ENCODE measurements at regions of chr2 and their contacts with region 1.

Region 1: DNA sequence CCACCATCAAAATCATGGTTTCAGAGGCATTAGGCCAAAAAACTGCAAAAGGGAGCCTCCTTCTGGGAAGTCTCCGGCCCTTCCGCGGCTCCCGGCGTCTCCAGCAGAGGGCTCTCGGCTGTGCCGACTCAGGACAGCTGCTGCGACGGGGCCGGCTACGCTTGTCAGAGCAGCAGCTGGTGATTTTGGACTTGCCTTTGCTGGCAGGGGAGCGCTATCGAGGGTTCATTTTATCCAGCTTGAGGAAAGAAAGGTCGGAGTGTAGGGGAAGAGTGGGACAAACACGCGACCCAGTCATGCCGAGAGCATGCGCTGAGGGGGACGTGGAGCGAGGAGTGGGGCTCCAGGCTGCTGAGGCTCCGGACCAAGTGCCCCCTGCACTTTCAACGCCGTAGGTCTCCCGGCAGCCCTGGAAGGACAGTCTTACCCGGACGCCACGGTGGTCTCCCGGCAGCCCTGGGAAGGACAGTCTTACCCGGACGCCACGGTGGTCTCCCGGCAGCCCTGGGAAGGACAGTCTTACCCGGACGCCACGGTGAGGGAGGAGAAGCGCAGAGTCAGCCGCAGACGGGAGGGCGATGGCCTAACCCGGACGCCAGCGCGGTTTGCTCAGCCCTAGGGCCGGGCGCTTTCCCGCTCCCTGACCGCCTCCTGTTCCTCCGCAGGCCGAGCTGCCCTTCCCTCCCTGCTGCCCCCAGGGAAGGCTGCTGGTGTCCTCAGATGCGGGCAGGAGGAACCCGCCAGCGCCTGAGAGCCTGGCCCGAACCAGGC is 21.7 kb downstream of the DDX18 start:
- DNase-seq: peak; percentile 74
- H3K4me3 ChIP-seq: peak overlapping the region; percentile 9 to 62 (median 34)
- H3K27ac ChIP-seq: no peak overlapping the region
- H3K4me1 ChIP-seq: peaks cover 3% of the 10 kb centered on the region
- H3K27me3 ChIP-seq: no peaks in the 10 kb centered on the region
- CTCF ChIP-seq: peak; percentile 96 to 99
- POLR2A ChIP-seq: peak; percentile 12

Region 2: DNA sequence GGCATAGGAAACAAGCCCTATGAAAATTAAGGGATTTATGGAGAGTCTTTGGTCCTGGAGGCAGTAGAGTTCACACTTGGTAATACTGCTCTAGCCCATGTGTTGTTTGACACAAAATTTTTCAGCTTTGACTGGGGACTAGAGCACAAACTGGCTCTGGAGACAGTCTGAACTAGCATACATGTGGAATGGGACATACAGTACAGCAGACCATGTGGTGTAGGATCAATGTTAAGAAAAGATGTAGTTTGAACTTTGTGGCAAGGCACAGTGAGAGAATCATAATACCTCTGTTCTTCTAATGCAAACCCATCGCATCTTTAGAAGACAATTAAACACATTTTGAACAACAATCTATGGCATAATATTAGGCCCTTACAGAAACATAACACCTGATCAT is 543.2 kb before region 1 on chr2:
- CTCF ChIA-PET with region 1: no interaction called
- POLR2A ChIA-PET with region 1: no interaction called
- dilution Hi-C with region 1: no loop called
- intact Hi-C with region 1: no loop called
- DNase-seq: no peak
- H3K4me3 ChIP-seq: no peak overlapping the region
- H3K27ac ChIP-seq: no peak overlapping the region
- H3K4me1 ChIP-seq: no peaks in the 10 kb centered on the region
- H3K27me3 ChIP-seq: no peaks in the 10 kb centered on the region
- CTCF ChIP-seq: no peak
- POLR2A ChIP-seq: no peak

Region 3: DNA sequence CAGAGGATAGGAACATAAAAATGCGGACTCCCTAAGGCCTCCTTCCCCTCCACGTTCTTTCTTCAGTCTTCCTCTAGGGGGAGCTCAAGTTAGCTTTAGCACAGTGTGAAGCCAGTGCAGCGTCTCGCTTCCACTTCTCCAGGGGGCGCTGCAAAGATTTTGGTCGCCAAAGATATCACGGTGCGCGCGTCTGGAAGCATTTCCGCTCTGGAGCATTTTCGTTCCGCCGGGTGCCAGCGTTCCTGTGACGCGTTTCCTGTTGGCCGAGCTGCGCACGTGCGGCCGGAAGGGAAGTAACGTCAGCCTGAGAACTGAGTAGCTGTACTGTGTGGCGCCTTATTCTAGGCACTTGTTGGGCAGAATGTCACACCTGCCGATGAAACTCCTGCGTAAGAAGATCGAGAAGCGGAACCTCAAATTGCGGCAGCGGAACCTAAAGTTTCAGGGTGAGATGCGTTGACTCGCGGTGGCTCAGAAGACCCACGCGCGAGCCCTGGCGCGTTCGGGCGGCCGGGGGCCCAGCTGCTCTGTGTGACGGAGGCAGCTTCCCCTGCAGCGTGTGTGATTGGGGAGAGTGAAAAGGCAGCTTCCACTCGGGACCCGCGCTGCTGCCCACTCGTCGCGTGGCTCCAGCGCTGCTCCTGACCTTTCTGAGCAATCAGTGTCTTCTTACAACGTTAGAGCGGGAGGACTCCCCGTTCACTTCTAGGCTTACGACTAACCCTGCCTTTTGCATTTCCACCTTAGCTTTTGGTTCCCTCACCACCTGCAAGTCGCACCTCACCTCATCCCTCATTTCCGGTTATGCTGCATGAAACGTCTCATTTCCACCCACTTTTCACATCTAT is 21.5 kb before region 1 on chr2 and contains the start of gene DDX18:
- CTCF ChIA-PET with region 1: interaction called, 18 read pairs
- POLR2A ChIA-PET with region 1: no interaction called
- dilution Hi-C with region 1: no loop called
- intact Hi-C with region 1: no loop called
- DNase-seq: peak; percentile 99
- H3K4me3 ChIP-seq: peak within 1 kb of the TSS; percentile 40 to 82 (median 60)
- H3K27ac ChIP-seq: peak within 1 kb of the TSS; percentile 89
- H3K4me1 ChIP-seq: peaks cover 10% of the 10 kb centered on the region
- H3K27me3 ChIP-seq: peaks cover 0 to 2% of the 10 kb centered on the region in 2 experiments
- CTCF ChIP-seq: peak; percentile 100
- POLR2A ChIP-seq: peak; percentile 87
- total RNA-seq, gene DDX18: 47.8 and 50.4 TPM in 2 replicates

Region 4: DNA sequence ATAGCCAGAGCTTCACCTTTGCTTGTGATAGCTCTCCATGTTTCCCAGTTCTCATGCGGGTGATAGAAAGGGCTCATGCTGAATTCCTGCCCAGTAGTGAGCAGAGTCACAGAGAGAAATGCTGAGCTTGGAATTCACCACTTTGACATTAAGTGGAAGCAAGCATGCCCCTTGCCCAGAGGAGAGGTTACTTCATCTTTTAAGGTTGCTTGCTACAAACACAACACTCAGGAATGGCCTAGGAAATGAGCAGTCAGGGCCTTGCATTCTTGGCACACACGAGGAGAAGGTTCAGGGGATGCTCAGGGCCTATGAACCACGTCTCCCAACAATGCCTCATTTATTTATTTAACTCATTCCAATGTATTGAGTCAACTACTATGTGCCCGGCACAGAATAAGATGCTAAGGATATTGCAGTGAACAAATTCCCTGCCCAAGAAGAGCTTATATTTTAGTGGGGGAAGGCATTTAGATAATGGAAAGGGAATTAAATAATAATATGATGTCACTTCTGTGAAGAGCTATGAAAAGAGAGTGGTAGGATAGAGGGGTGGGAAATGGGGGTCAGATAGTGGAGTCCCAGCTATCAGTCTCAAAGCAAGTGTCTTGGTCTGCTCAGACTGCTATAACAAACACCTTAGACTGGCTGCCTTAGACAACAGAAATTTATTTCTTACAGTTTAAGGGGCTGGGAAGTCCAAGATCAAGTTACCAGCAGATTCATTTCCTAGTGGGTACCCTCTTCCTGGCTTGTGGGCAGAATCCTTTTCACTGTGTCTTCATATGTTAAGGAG is 20.4 kb after region 1 on chr2:
- CTCF ChIA-PET with region 1: interaction called, 17 read pairs
- POLR2A ChIA-PET with region 1: interaction called, 4 read pairs
- dilution Hi-C with region 1: no loop called
- intact Hi-C with region 1: loop called (anchors 1 kb)
- DNase-seq: peak; percentile 88
- H3K4me3 ChIP-seq: no peak overlapping the region
- H3K27ac ChIP-seq: peak overlapping the region; percentile 73
- H3K4me1 ChIP-seq: peaks cover 22% of the 10 kb centered on the region
- H3K27me3 ChIP-seq: peaks cover 7 to 12% of the 10 kb centered on the region in 2 experiments
- CTCF ChIP-seq: no peak
- POLR2A ChIP-seq: peak; percentile 4

Region 5: DNA sequence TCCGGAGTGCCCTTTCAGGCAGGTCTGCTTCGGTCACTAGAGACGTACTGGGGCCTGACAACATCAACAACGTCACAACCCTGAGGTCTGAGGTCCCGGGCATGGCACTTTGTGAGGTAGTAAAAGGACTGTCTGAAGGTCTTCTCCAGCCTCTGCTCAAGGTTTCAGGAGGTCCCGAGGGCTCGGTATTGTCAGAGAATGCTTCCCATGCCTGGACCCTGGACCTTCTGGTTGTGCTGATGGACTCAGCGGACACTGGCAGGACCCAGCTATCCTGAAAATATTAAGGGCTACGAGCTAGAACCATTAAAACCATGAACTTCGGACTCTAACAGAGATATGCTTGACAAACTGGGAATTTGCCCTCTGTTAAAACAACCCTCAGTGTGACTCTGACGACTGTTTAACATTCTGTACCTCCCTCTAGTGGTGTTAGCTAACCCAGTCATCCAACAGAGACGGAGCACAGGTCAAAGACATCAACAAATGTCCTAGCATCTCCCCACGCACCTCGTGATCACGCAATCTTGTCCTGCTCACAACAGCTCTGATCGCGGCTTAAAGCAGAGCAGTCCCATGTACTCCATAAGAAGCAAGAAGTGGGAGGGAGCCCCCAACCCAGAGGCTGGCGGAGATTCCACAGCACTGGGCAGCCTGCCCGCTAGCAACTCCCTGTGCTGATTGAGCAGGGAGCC is 81.2 kb after region 1 on chr2:
- CTCF ChIA-PET with region 1: interaction called, 15 read pairs
- POLR2A ChIA-PET with region 1: no interaction called
- dilution Hi-C with region 1: no loop called
- intact Hi-C with region 1: loop called (anchors 1 kb)
- DNase-seq: no peak
- H3K4me3 ChIP-seq: no peak overlapping the region
- H3K27ac ChIP-seq: no peak overlapping the region
- H3K4me1 ChIP-seq: no peaks in the 10 kb centered on the region
- H3K27me3 ChIP-seq: no peaks in the 10 kb centered on the region
- CTCF ChIP-seq: no peak
- POLR2A ChIP-seq: no peak

Region 6: DNA sequence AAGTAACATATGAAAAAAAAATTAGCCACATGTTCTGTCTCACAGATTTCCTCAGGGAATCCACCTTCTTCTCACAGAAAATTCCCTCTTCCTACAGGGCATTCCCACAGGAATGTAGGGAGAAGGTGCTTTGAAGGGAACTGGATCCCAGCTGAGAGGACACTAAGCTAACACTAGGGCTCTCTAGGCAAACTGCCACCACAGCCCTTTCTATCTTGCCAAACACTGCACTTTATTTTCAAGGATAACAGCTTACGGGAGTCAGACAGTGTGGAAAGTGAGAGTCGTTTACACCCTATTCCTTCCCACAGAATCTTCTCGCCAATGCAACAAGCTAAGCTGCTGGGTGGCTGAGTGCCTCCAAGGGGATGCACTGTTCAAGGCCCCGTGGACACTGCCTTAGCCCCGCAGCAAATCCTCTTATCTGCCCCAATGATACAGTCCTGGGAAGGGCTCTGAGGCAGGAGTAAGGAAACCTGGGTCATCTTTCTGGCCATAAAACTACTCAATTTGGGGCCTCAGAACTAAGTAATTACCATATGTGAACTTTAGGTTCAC is 100.8 kb after region 1 on chr2:
- CTCF ChIA-PET with region 1: interaction called, 15 read pairs
- POLR2A ChIA-PET with region 1: no interaction called
- dilution Hi-C with region 1: no loop called
- intact Hi-C with region 1: loop called (anchors 5 kb)
- DNase-seq: no peak
- H3K4me3 ChIP-seq: no peak overlapping the region
- H3K27ac ChIP-seq: no peak overlapping the region
- H3K4me1 ChIP-seq: peaks cover 4% of the 10 kb centered on the region
- H3K27me3 ChIP-seq: no peaks in the 10 kb centered on the region
- CTCF ChIP-seq: no peak
- POLR2A ChIP-seq: no peak

Region 7: GRCh38 chr2:117958186-117958585 is 122.0 kb after region 1 on chr2:
- CTCF ChIA-PET with region 1: interaction called, 6 read pairs
- POLR2A ChIA-PET with region 1: no interaction called
- dilution Hi-C with region 1: no loop called
- intact Hi-C with region 1: loop called (anchors 1 kb)
- DNase-seq: peak; percentile 88
- H3K4me3 ChIP-seq: no peak overlapping the region
- H3K27ac ChIP-seq: peak overlapping the region; percentile 86
- H3K4me1 ChIP-seq: peaks cover 37% of the 10 kb centered on the region
- H3K27me3 ChIP-seq: no peaks in the 10 kb centered on the region
- CTCF ChIP-seq: no peak
- POLR2A ChIP-seq: no peak

Region 8: GRCh38 chr2:118013724-118014491 is 177.7 kb after region 1 on chr2 and contains the start of gene CCDC93:
- CTCF ChIA-PET with region 1: interaction called, 4 read pairs
- POLR2A ChIA-PET with region 1: no interaction called
- dilution Hi-C with region 1: no loop called
- intact Hi-C with region 1: loop called (anchors 1 kb)
- DNase-seq: peak; percentile 89
- H3K4me3 ChIP-seq: peak within 1 kb of the TSS; percentile 89 to 97 (median 95)
- H3K27ac ChIP-seq: peak within 1 kb of the TSS; percentile 80
- H3K4me1 ChIP-seq: peaks cover 14% of the 10 kb centered on the region
- H3K27me3 ChIP-seq: peaks cover 2 to 3% of the 10 kb centered on the region in 2 experiments
- CTCF ChIP-seq: no peak
- POLR2A ChIP-seq: peak; percentile 71
- total RNA-seq, gene CCDC93: 29.3 and 35.1 TPM in 2 replicates